ENCODE measurements at regions of chr2 and their contacts with region 1.

Region 1: GRCh38 chr2:177724398-177725287 is 332.1 kb downstream of the AGPS start:
- DNase-seq: peak; percentile 48 to 66 (median 57)
- H3K4me3 ChIP-seq: no peak overlapping the region
- H3K27ac ChIP-seq: no peak overlapping the region
- H3K4me1 ChIP-seq: no peaks in the 10 kb centered on the region
- H3K27me3 ChIP-seq: peaks cover 0 to 3% (median 0%) of the 10 kb centered on the region in 5 experiments

Region 2: GRCh38 chr2:177489719-177490301 is 234.8 kb before region 1 on chr2:
- CTCF ChIA-PET with region 1: interaction called, 17 read pairs
- POLR2A ChIA-PET with region 1: no interaction called
- DNase-seq: peak in 2 of 3 donors; percentile 18
- H3K4me3 ChIP-seq: no peak overlapping the region
- H3K27ac ChIP-seq: no peak overlapping the region
- H3K4me1 ChIP-seq: no peaks in the 10 kb centered on the region
- H3K27me3 ChIP-seq: no peaks in the 10 kb centered on the region

Region 3: DNA sequence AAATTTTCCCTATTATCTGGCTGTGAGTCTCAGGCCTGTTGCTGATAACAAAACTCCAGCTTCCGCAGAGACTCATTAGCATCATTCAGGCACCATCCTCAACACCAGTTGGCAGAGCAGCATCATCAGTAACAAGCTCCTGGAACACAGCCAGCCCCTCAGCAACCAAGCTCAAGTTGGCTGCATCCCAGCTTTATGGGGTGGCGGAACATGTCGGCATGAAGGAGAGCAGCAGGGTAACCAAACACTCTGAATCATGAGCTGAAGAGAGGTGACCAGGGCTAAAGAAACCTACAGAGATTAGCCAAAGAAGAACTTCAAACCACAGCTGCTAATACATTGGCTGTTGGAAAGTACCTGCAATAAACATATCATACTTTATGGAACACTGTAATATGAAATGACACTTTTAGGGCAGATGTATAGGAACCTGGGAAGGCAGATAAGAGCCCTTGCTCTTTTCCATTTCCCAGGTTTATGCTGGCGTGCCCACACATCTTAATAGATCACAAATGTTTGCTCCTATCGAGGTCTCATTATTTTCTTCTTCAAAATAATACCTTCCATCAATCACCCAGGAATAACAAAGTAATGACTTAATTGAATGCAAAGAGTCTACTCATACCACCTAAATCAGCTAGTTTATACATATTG is 284.1 kb after region 1 on chr2:
- CTCF ChIA-PET with region 1: no interaction called
- POLR2A ChIA-PET with region 1: no interaction called
- DNase-seq: peak in 2 of 3 donors; percentile 3 to 4
- H3K4me3 ChIP-seq: no peak overlapping the region
- H3K27ac ChIP-seq: no peak overlapping the region
- H3K4me1 ChIP-seq: no peaks in the 10 kb centered on the region
- H3K27me3 ChIP-seq: no peaks in the 10 kb centered on the region